Gastrocnemius medialis (tissue), 4 donors: ENCODE measurements at regions of chr14 and their contacts with region 1.

Region 1: GRCh38 chr14:93184388-93185353 is at the starts of genes LYSET and MOAP1:
- DNase-seq: peak; percentile 85 to 86
- ATAC-seq: peak; percentile 95 to 97
- H3K4me3 ChIP-seq: peak within 1 kb of the TSS; percentile 72 to 92 (median 74)
- H3K27ac ChIP-seq: peak within 1 kb of the TSS; percentile 91 to 100 (median 100)
- H3K4me1 ChIP-seq: peaks cover 21 to 28% of the 10 kb centered on the region in 2 donors
- H3K27me3 ChIP-seq: no peaks in the 10 kb centered on the region
- CTCF ChIP-seq: peak in 3 of 5 experiments; percentile 22 to 44 (median 38)
- POLR2A ChIP-seq: peak; percentile 80 to 86
- total RNA-seq, gene LYSET: 9.7 to 16.0 (median 14.0) TPM
- total RNA-seq, gene MOAP1: 31.1 to 41.9 (median 32.2) TPM

Region 2: DNA sequence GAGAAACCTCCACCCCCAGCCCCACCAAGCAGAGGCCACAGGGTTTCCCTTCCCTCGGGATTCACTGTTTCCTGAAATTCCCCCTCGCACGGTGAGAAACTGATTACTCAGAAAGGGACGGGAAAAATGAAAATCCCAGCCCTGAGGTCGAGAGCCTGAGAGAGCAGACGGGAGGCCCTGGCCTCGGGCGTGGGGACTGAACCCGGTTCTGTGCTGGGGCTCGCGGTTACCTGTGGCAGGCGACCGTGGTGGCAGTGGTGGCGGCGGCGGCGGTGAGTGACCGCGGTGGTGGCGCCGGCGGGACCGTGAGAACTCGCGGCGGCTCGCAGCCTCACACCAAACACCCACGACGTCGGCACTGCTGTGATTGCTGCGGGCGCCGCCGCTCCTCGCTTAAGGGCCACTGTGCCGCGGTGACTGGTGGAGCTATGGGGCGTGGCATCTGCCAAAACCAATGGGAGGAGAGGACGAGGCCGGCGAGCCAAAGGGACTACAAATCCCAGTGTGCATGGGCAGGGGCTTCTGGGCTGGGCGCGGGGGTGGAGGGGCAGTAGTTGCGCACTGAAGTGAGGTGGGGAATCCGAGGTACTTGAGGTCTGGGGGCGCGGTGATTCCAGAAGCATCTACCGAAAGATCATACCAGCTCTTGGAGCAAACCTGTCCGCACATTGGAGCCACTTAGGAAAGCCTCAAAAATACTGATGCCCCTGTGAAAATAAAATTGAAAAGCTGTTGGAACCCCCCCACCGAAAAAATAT is 436.2 kb before region 1 on chr14 and contains the start of gene LGMN:
- in situ Hi-C with region 1: no loop called
- intact Hi-C with region 1: loop called (anchors 10 kb)
- DNase-seq: peak; percentile 97 to 98
- ATAC-seq: peak; percentile 99
- H3K4me3 ChIP-seq: peak within 1 kb of the TSS; percentile 67 to 99 (median 90)
- H3K27ac ChIP-seq: peak within 1 kb of the TSS; percentile 86 to 98 (median 90)
- H3K4me1 ChIP-seq: peaks cover 8 to 13% of the 10 kb centered on the region in 2 donors
- H3K27me3 ChIP-seq: no peaks in the 10 kb centered on the region
- CTCF ChIP-seq: no peak
- POLR2A ChIP-seq: peak; percentile 94 to 99
- total RNA-seq, gene LGMN: 53.5 to 78.5 (median 62.8) TPM

Region 3: GRCh38 chr14:92793709-92794546 is 390.7 kb before region 1 on chr14 and contains the start of gene GOLGA5:
- in situ Hi-C with region 1: no loop called
- intact Hi-C with region 1: loop called (anchors 10 kb)
- DNase-seq: peak; percentile 95 to 97
- ATAC-seq: peak; percentile 94 to 95
- H3K4me3 ChIP-seq: peak within 1 kb of the TSS; percentile 76 to 95 (median 92)
- H3K27ac ChIP-seq: peak within 1 kb of the TSS; percentile 87 to 92 (median 90)
- H3K4me1 ChIP-seq: peaks cover 15 to 26% of the 10 kb centered on the region in 2 donors
- H3K27me3 ChIP-seq: no peaks in the 10 kb centered on the region
- CTCF ChIP-seq: peak in 4 of 5 experiments; percentile 23 to 33 (median 30)
- POLR2A ChIP-seq: peak; percentile 73 to 83
- total RNA-seq, gene GOLGA5: 27.0 to 34.8 (median 33.8) TPM

Region 4: GRCh38 chr14:93012951-93013719 is 171.5 kb before region 1 on chr14:
- in situ Hi-C with region 1: no loop called
- intact Hi-C with region 1: loop called (anchors 10 kb)
- DNase-seq: no peak
- ATAC-seq: no peak
- H3K4me3 ChIP-seq: no peak overlapping the region
- H3K27ac ChIP-seq: peak overlapping the region in 2 of 4 donors; percentile 4
- H3K4me1 ChIP-seq: peaks cover 79 to 80% of the 10 kb centered on the region in 2 donors
- H3K27me3 ChIP-seq: no peaks in the 10 kb centered on the region
- CTCF ChIP-seq: no peak
- POLR2A ChIP-seq: no peak

Region 5: GRCh38 chr14:93115069-93115820 is 69.4 kb before region 1 on chr14:
- in situ Hi-C with region 1: no loop called
- intact Hi-C with region 1: loop called (anchors 2 kb)
- DNase-seq: peak; percentile 71 to 78
- ATAC-seq: peak; percentile 77 to 80
- H3K4me3 ChIP-seq: peak overlapping the region; percentile 83 to 94 (median 92)
- H3K27ac ChIP-seq: peak overlapping the region; percentile 95 to 96 (median 96)
- H3K4me1 ChIP-seq: peaks cover 24 to 29% of the 10 kb centered on the region in 2 donors
- H3K27me3 ChIP-seq: no peaks in the 10 kb centered on the region
- CTCF ChIP-seq: peak in 2 of 5 experiments; percentile 3 to 7
- POLR2A ChIP-seq: peak; percentile 58 to 69

Region 6: GRCh38 chr14:93195316-93195999 is 10.8 kb after region 1 on chr14:
- in situ Hi-C with region 1: no loop called
- intact Hi-C with region 1: no loop called
- DNase-seq: no peak
- ATAC-seq: peak; percentile 77 to 85
- H3K4me3 ChIP-seq: no peak overlapping the region
- H3K27ac ChIP-seq: peak overlapping the region; percentile 49 to 77 (median 74)
- H3K4me1 ChIP-seq: peaks cover 17% of the 10 kb centered on the region in 2 donors
- H3K27me3 ChIP-seq: no peaks in the 10 kb centered on the region
- CTCF ChIP-seq: no peak
- POLR2A ChIP-seq: no peak

Region 7: GRCh38 chr14:93206793-93207467 is 22.3 kb after region 1 on chr14 and contains the starts of genes GON7 and UBR7:
- in situ Hi-C with region 1: no loop called
- intact Hi-C with region 1: loop called (anchors 1 kb)
- DNase-seq: peak; percentile 94 to 95
- ATAC-seq: peak; percentile 98 to 100
- H3K4me3 ChIP-seq: peak within 1 kb of the TSS; percentile 82 to 89 (median 87)
- H3K27ac ChIP-seq: peak within 1 kb of the TSS; percentile 85 to 96 (median 88)
- H3K4me1 ChIP-seq: peaks cover 21 to 24% of the 10 kb centered on the region in 2 donors
- H3K27me3 ChIP-seq: no peaks in the 10 kb centered on the region
- CTCF ChIP-seq: peak in 3 of 5 experiments; percentile 19 to 54 (median 48)
- POLR2A ChIP-seq: peak; percentile 71 to 81
- total RNA-seq, gene GON7: 8.3 to 17.9 (median 11.1) TPM
- total RNA-seq, gene UBR7: 14.8 to 36.4 (median 27.4) TPM

Region 8: GRCh38 chr14:93219103-93219726 is 34.5 kb after region 1 on chr14:
- in situ Hi-C with region 1: no loop called
- intact Hi-C with region 1: no loop called
- DNase-seq: no peak
- ATAC-seq: peak; percentile 65 to 76
- H3K4me3 ChIP-seq: no peak overlapping the region
- H3K27ac ChIP-seq: no peak overlapping the region
- H3K4me1 ChIP-seq: no peaks in the 10 kb centered on the region
- H3K27me3 ChIP-seq: no peaks in the 10 kb centered on the region
- CTCF ChIP-seq: peak in 3 of 5 experiments; percentile 21 to 58 (median 48)
- POLR2A ChIP-seq: no peak